HepG2 (cell line): ENCODE measurements at regions of chr6 and their contacts with region 1.

Region 1: GRCh38 chr6:53651764-53652401 is 13.7 kb downstream of the KLHL31 start:
- DNase-seq: peak; percentile 86
- ATAC-seq: peak; percentile 98
- H3K4me3 ChIP-seq: peak overlapping the region; percentile 65 to 84 (median 73)
- H3K27ac ChIP-seq: peak overlapping the region; percentile 85
- H3K4me1 ChIP-seq: peaks cover 27% of the 10 kb centered on the region
- H3K27me3 ChIP-seq: no peaks in the 10 kb centered on the region; a peak in 1 of 5 replicates
- CTCF ChIP-seq: peak; percentile 93
- EP300 ChIP-seq: peak in 1 of 2 experiments; percentile 40; a peak in 2 of 4 replicates
- POLR2A ChIP-seq: peak; percentile 88
- RAD21 ChIP-seq: peak; percentile 79

Region 2: GRCh38 chr6:53513519-53513966 is 138.3 kb before region 1 on chr6:
- CTCF ChIA-PET with region 1: no interaction called
- POLR2A ChIA-PET with region 1: interaction called, 5 read pairs
- in situ Hi-C with region 1: no loop called
- intact Hi-C with region 1: loop called (anchors 1 kb)
- DNase-seq: peak; percentile 19
- ATAC-seq: peak; percentile 59
- H3K4me3 ChIP-seq: no peak overlapping the region
- H3K27ac ChIP-seq: peak overlapping the region; percentile 39
- H3K4me1 ChIP-seq: peaks cover 59% of the 10 kb centered on the region
- H3K27me3 ChIP-seq: no peaks in the 10 kb centered on the region
- CTCF ChIP-seq: peak; percentile 41; the same call in 1 of the 2 replicates
- EP300 ChIP-seq: 0 out of 4 replicates have a peak, but pooled peaks of 1 of the 2 experiments have one; percentile 8
- POLR2A ChIP-seq: no peak
- RAD21 ChIP-seq: no peak

Region 3: GRCh38 chr6:53615633-53616449 is 36.0 kb before region 1 on chr6:
- CTCF ChIA-PET with region 1: no interaction called
- POLR2A ChIA-PET with region 1: interaction called, 18 read pairs
- in situ Hi-C with region 1: no loop called
- intact Hi-C with region 1: loop called (anchors 1 kb)
- DNase-seq: peak; percentile 100
- ATAC-seq: peak; percentile 95
- H3K4me3 ChIP-seq: peak overlapping the region; percentile 35 to 60 (median 44); a peak in 5 of 6 replicates
- H3K27ac ChIP-seq: peak overlapping the region; percentile 97
- H3K4me1 ChIP-seq: peaks cover 53% of the 10 kb centered on the region
- H3K27me3 ChIP-seq: no peaks in the 10 kb centered on the region
- CTCF ChIP-seq: no peak; the same call in 1 of the 2 replicates
- EP300 ChIP-seq: peak; percentile 96 to 97
- POLR2A ChIP-seq: peak; percentile 73 to 91
- RAD21 ChIP-seq: no peak; the same call in 1 of the 2 replicates

Region 4: GRCh38 chr6:53679446-53679933 is 27.6 kb after region 1 on chr6:
- CTCF ChIA-PET with region 1: no interaction called
- POLR2A ChIA-PET with region 1: no interaction called
- in situ Hi-C with region 1: no loop called
- intact Hi-C with region 1: no loop called
- DNase-seq: peak; percentile 62
- ATAC-seq: peak; percentile 89
- H3K4me3 ChIP-seq: no peak overlapping the region
- H3K27ac ChIP-seq: no peak overlapping the region
- H3K4me1 ChIP-seq: no peaks in the 10 kb centered on the region
- H3K27me3 ChIP-seq: 0 out of 5 replicates have a peak, but pooled peaks cover 0 to 4% of the 10 kb centered on the region in 2 experiments
- CTCF ChIP-seq: peak; percentile 47
- EP300 ChIP-seq: no peak
- POLR2A ChIP-seq: no peak
- RAD21 ChIP-seq: peak; percentile 54; the same call in 1 of the 2 replicates

Region 5: GRCh38 chr6:53725791-53726431 is 74.0 kb after region 1 on chr6:
- CTCF ChIA-PET with region 1: no interaction called
- POLR2A ChIA-PET with region 1: interaction called, 5 read pairs
- in situ Hi-C with region 1: no loop called
- intact Hi-C with region 1: loop called (anchors 2 kb)
- DNase-seq: peak; percentile 72
- ATAC-seq: peak; percentile 94
- H3K4me3 ChIP-seq: no peak overlapping the region
- H3K27ac ChIP-seq: no peak overlapping the region
- H3K4me1 ChIP-seq: peaks cover 17% of the 10 kb centered on the region; the same call in 1 of the 2 replicates
- H3K27me3 ChIP-seq: no peaks in the 10 kb centered on the region
- CTCF ChIP-seq: peak; percentile 95
- EP300 ChIP-seq: no peak
- POLR2A ChIP-seq: no peak
- RAD21 ChIP-seq: peak; percentile 82